GM12878 (cell line): ENCODE measurements at regions of chr5 and their contacts with region 1.

Region 1: GRCh38 chr5:139765409-139766217 is 30.0 kb upstream of the PSD2 start:
- DNase-seq: no peak
- ATAC-seq: peak; percentile 94
- H3K4me3 ChIP-seq: peak overlapping the region; percentile 71; the same call in 1 of the 2 replicates
- H3K27ac ChIP-seq: no peak overlapping the region
- H3K4me1 ChIP-seq: no peaks in the 10 kb centered on the region
- H3K27me3 ChIP-seq: peaks cover 11 to 14% of the 10 kb centered on the region in 2 experiments
- CTCF ChIP-seq: peak; percentile 57 to 93 (median 86)
- EP300 ChIP-seq: no peak
- POLR2A ChIP-seq: no peak
- RAD21 ChIP-seq: peak; percentile 77

Region 2: DNA sequence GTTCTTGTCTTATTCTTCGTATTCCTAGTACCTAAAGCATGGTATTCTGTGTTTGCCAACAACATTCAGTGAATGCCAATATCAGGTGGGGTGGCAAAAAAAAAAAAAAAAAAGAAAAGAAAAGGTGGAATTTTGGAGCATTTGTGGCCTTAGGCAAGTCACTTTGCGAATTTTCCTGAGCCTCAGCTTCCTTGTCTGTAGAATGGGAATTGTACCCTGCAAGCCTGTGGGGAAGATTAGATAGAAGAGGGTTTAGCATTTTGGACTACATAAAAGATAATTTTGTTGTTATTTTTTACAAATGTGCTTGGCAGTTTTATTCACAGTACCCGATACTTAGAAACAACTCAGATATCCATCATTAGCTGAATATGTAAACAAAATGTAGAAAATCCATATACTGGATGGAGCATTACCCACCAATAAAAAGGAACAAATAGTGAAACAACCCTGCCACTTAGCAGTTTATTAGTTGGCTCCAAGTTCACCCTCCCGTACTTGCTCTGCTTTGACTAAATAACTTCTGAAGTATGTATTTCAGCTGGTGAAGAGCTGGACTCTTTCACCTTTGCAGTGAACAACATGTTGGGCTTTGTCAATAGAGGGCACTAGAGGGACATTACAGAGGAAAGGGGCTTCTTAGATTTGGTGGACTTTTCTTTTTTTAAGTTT is 190.8 kb before region 1 on chr5:
- CTCF ChIA-PET with region 1: interaction called, 17 read pairs
- POLR2A ChIA-PET with region 1: no interaction called
- RAD21 ChIA-PET with region 1: no interaction called
- SMC1A ChIA-PET with region 1: interaction called, 4 read pairs
- in situ Hi-C with region 1: no loop called
- intact Hi-C with region 1: loop called (anchors 5 kb)
- DNase-seq: no peak
- ATAC-seq: peak; percentile 78
- H3K4me3 ChIP-seq: no peak overlapping the region
- H3K27ac ChIP-seq: no peak overlapping the region
- H3K4me1 ChIP-seq: peaks cover 40% of the 10 kb centered on the region
- H3K27me3 ChIP-seq: no peaks in the 10 kb centered on the region
- CTCF ChIP-seq: peak; percentile 65 to 78 (median 70)
- EP300 ChIP-seq: no peak
- POLR2A ChIP-seq: no peak
- RAD21 ChIP-seq: peak; percentile 75

Region 3: GRCh38 chr5:139651853-139652787 is 113.5 kb before region 1 on chr5:
- CTCF ChIA-PET with region 1: interaction called, 16 read pairs
- POLR2A ChIA-PET with region 1: no interaction called
- RAD21 ChIA-PET with region 1: interaction called, 13 read pairs
- SMC1A ChIA-PET with region 1: interaction called, 5 read pairs
- in situ Hi-C with region 1: no loop called
- intact Hi-C with region 1: no loop called
- DNase-seq: peak; percentile 85
- ATAC-seq: peak; percentile 51
- H3K4me3 ChIP-seq: peak overlapping the region; percentile 96
- H3K27ac ChIP-seq: peak overlapping the region; percentile 91
- H3K4me1 ChIP-seq: peaks cover 59% of the 10 kb centered on the region
- H3K27me3 ChIP-seq: no peaks in the 10 kb centered on the region
- CTCF ChIP-seq: no peak
- EP300 ChIP-seq: peak; percentile 55 to 62; a peak in 2 of 4 replicates
- POLR2A ChIP-seq: no peak
- RAD21 ChIP-seq: no peak

Region 4: DNA sequence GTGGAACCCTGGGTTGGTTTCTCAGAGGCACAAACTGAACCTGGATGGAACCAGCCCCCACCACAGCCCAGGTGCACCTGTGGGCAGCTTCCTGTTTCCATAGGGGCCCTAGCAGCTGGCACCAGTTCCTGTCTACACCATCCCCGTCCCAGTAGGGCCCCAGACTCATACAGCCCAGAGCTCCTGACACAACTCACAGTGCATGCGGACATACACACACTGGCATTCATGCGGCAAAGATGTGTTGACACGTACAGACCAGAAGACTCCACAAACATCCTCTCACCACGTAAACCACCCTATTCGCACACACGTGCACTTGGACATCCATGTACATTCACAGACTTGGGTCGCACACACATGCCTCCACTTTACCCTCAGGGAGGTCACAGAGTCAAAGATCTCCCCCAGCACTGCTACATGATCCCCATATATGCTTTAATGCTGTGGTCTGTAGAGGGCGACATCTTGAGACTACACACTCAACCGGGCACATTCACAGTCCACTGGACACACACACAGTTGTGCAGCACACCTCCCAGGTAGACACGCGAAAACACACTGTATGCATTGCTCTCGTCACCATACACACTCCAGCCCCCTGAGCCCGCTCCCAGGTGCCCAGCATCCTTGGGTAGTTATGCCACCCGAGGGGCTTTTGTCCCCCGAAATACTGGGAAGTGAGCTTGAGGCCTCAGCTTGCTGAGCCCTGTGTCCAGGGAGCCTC is 95.1 kb before region 1 on chr5:
- CTCF ChIA-PET with region 1: interaction called, 18 read pairs
- POLR2A ChIA-PET with region 1: interaction called, 3 read pairs
- RAD21 ChIA-PET with region 1: interaction called, 12 read pairs
- SMC1A ChIA-PET with region 1: interaction called, 17 read pairs
- in situ Hi-C with region 1: no loop called
- intact Hi-C with region 1: no loop called
- DNase-seq: peak; percentile 90
- ATAC-seq: peak; percentile 59
- H3K4me3 ChIP-seq: peak overlapping the region; percentile 84
- H3K27ac ChIP-seq: peak overlapping the region; percentile 99
- H3K4me1 ChIP-seq: peaks cover 54% of the 10 kb centered on the region
- H3K27me3 ChIP-seq: no peaks in the 10 kb centered on the region
- CTCF ChIP-seq: peak; percentile 52 to 65 (median 53)
- EP300 ChIP-seq: peak in 1 of 2 experiments; percentile 37; a peak in 1 of 4 replicates
- POLR2A ChIP-seq: no peak
- RAD21 ChIP-seq: peak; percentile 34

Region 5: DNA sequence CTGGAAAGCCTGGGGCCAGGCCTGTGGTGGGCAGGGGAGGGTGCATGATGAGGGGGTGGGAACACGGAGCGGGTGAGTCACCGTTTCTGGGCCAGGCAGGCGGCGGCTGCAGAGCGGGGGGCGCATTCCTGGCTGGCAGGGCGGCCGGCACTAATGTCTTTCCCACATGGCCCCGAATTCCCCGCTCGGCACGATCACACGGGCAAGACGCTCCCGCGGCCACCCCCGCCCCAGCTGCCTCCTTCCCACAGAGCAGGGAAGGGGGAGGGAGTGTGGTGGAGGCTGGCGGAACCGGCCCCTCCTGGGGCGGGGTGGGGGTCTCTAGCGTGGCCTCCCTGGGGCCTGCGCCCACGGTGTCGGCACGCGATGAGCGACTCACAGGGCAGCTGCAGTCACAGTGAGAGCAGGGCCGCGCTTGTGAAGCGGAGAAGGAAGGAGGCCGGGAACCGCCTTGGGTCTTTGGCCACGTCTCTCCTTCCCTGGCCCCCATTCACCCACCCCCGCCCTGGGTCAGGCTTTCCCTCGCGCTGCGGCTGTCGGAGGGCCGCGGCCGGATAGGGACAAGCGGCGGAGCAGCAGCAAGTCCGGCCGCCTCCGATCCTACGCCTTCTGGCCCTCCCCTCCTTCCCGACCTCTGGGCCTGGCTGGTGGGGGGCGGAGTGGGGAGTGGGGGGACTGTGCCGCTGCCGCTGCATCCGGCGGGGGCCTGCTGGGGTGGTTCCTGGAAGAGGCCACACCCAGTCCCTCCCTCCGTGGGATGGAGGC is 68.5 kb before region 1 on chr5:
- CTCF ChIA-PET with region 1: interaction called, 65 read pairs
- POLR2A ChIA-PET with region 1: no interaction called
- RAD21 ChIA-PET with region 1: interaction called, 24 read pairs
- SMC1A ChIA-PET with region 1: interaction called, 9 read pairs
- in situ Hi-C with region 1: no loop called
- intact Hi-C with region 1: no loop called
- DNase-seq: no peak
- ATAC-seq: peak; percentile 46
- H3K4me3 ChIP-seq: 0 out of 2 replicates have a peak overlapping the region, but pooled peaks have one; percentile 17
- H3K27ac ChIP-seq: no peak overlapping the region
- H3K4me1 ChIP-seq: peaks cover 12% of the 10 kb centered on the region
- H3K27me3 ChIP-seq: peaks cover 0 to 3% of the 10 kb centered on the region in 2 experiments; a peak in 2 of 4 replicates
- CTCF ChIP-seq: no peak
- EP300 ChIP-seq: no peak
- POLR2A ChIP-seq: no peak
- RAD21 ChIP-seq: no peak

Region 6: GRCh38 chr5:139711067-139711905 is 54.3 kb before region 1 on chr5:
- CTCF ChIA-PET with region 1: interaction called, 26 read pairs
- POLR2A ChIA-PET with region 1: interaction called, 4 read pairs
- RAD21 ChIA-PET with region 1: interaction called, 7 read pairs
- SMC1A ChIA-PET with region 1: interaction called, 4 read pairs
- in situ Hi-C with region 1: no loop called
- intact Hi-C with region 1: no loop called
- DNase-seq: no peak
- ATAC-seq: peak; percentile 72
- H3K4me3 ChIP-seq: peak overlapping the region; percentile 75
- H3K27ac ChIP-seq: no peak overlapping the region
- H3K4me1 ChIP-seq: peaks cover 21% of the 10 kb centered on the region
- H3K27me3 ChIP-seq: peaks cover 5 to 6% of the 10 kb centered on the region in 2 experiments; a peak in 3 of 4 replicates
- CTCF ChIP-seq: peak; percentile 4 to 38 (median 29); a peak in 3 of 6 replicates
- EP300 ChIP-seq: no peak
- POLR2A ChIP-seq: no peak
- RAD21 ChIP-seq: peak; percentile 39

Region 7: DNA sequence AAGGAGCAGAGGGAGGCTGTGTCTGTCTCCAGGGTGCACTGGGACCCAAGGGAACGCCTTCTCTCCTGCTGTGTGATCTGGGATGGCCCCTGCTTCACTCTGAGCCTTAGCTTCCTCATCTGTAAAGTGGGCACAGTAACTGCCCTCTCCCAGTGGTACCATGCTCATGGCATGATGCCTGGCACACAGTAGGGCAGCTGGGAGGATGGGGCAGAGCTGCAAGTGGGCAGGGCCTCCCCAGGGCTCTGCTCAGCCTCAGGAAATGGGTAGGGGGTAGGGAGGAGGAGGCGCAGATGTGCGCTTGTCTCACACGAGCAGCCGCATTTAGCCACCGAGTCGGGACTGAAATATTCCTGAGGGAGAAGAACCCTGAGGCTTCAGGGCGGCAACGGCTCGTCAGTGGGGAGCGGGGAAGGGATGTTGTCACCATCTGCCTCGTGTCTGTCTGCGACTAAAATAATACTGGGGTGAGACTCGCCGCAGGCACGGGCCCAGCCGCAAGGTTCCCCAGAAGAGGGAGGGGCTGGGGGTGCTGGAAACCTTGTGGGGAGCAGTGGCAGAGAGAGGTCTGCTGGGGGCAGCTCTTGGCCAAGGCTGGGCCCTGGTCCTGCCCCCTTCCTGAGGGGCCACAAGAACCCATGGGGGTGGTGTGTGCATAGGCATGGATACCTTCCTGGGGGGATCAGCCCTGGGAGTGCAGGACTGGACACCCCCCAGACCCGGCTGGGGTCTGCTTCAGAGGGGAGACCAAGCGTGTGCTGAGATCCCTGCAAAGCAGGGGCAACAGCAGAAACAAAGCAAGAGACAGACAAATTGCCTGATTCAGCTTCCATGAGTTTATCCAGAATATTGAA is 25.2 kb before region 1 on chr5:
- CTCF ChIA-PET with region 1: interaction called, 25 read pairs
- POLR2A ChIA-PET with region 1: interaction called, 3 read pairs
- RAD21 ChIA-PET with region 1: interaction called, 11 read pairs
- SMC1A ChIA-PET with region 1: interaction called, 8 read pairs
- in situ Hi-C with region 1: no loop called
- intact Hi-C with region 1: no loop called
- DNase-seq: no peak
- ATAC-seq: peak; percentile 40
- H3K4me3 ChIP-seq: no peak overlapping the region
- H3K27ac ChIP-seq: no peak overlapping the region
- H3K4me1 ChIP-seq: peaks cover 25% of the 10 kb centered on the region
- H3K27me3 ChIP-seq: no peaks in the 10 kb centered on the region
- CTCF ChIP-seq: no peak
- EP300 ChIP-seq: no peak
- POLR2A ChIP-seq: no peak
- RAD21 ChIP-seq: no peak

Region 8: DNA sequence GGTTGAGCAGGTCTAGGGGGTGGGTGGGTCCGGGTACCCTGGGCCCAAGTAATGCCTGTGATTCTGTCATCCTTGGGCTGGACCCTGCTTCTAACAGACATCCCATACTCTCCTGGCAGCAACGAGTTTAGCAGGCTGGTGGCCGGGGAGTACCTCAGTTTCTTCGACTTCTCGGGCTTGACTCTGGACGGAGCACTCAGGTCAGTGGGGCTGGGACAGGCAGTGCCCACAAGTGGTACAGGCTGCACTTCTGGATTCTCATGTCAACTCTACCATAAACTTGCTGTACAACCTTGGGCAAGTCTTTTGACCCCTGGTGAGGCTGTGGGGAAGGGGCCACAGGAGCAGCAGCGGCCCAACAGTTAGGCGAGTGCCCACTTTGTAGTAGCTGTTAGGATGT is 51.7 kb after region 1 on chr5:
- CTCF ChIA-PET with region 1: no interaction called
- POLR2A ChIA-PET with region 1: no interaction called
- RAD21 ChIA-PET with region 1: no interaction called
- SMC1A ChIA-PET with region 1: no interaction called
- in situ Hi-C with region 1: no loop called
- intact Hi-C with region 1: no loop called
- DNase-seq: no peak
- ATAC-seq: no peak
- H3K4me3 ChIP-seq: no peak overlapping the region
- H3K27ac ChIP-seq: no peak overlapping the region
- H3K4me1 ChIP-seq: no peaks in the 10 kb centered on the region
- H3K27me3 ChIP-seq: peaks cover 2 to 4% of the 10 kb centered on the region in 2 experiments; a peak in 3 of 4 replicates
- CTCF ChIP-seq: no peak
- EP300 ChIP-seq: no peak
- POLR2A ChIP-seq: no peak
- RAD21 ChIP-seq: no peak

Region 9: GRCh38 chr5:139828207-139828895 is 62.7 kb after region 1 on chr5:
- CTCF ChIA-PET with region 1: no interaction called
- POLR2A ChIA-PET with region 1: no interaction called
- RAD21 ChIA-PET with region 1: no interaction called
- SMC1A ChIA-PET with region 1: no interaction called
- in situ Hi-C with region 1: no loop called
- intact Hi-C with region 1: no loop called
- DNase-seq: no peak
- ATAC-seq: no peak
- H3K4me3 ChIP-seq: no peak overlapping the region
- H3K27ac ChIP-seq: no peak overlapping the region
- H3K4me1 ChIP-seq: no peaks in the 10 kb centered on the region
- H3K27me3 ChIP-seq: peaks cover 0 to 10% of the 10 kb centered on the region in 2 experiments; a peak in 2 of 4 replicates
- CTCF ChIP-seq: no peak
- EP300 ChIP-seq: no peak
- POLR2A ChIP-seq: no peak
- RAD21 ChIP-seq: no peak